Activated B cell treated with CpG ODN at 0.5 μM for 24 hours (primary cell): ENCODE measurements at regions of chr9 and their contacts with region 1.

Region 1: DNA sequence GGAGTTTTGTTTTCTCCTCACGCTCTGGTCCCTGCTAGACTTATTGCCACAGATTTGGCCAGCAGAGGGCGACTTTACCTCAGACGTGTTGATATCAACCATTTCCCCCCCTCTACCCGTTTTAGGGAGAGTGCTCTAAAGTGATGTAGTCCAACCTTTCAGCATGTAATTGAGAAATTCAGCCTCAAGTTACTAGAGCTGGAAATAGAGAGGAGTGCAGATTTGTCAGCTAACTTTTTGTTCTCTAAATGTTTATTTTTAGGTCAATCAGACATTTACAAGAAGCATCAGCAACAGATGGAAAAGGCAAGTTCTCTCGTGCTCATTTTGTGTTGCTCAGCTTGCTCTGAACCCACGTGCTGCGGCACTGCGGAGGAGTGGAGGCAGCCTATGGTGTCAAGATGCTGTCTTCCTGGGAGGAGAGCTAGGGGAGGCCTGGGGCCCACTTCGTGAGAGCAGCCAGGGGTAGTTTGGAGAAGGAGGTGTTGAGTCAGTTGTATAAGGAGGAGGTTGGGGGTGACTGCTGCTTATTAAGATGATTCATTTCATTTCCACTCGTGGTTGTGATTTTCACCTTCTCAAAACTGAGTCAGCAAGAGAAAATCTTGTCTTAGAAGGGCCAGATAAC is 53.6 kb downstream of the GPR107 start:
- DNase-seq: peak; percentile 58
- ATAC-seq: peak; percentile 90
- H3K4me3 Mint-ChIP-seq: no peak overlapping the region
- H3K27ac Mint-ChIP-seq: peak overlapping the region; percentile 41
- H3K4me1 Mint-ChIP-seq: peaks cover 10% of the 10 kb centered on the region
- H3K27me3 Mint-ChIP-seq: no peaks in the 10 kb centered on the region
- CTCF ChIP-seq: peak; percentile 34

Region 2: DNA sequence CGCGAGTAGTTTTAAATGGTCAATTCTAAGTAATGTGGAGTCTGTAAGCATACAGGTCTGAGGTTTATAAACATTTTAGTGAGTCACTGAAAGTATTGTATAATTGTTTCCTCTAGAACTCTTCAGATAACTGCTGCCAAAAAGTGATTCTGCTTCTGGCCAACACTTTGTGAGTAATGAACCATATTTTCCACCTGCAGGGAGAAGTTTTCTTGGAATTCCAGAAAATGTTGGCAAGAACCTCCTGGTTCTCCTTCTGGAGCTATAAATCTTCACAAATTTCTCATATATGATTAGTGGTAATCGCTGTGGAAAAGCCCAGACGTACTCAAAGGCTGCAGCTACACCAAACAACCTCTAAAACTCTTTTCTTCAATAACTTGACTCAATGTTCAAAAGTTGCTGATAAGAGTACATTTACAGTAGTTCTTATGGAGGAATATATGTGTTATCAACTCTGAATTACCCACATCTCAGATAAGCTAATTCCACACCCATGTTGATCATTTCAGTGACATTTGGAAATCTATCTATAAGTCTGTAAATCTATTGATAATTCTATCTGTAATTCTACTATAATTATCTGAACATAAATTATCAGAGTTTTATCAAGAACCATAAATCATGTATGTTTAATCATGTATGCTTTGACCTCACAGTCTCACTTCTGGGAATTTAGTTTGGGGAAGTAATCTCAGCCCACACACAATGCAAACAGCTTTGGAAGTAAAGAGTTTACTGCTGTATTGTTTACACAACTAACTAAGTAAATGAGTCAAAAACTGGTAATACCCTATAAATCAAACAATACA is 138.5 kb before region 1 on chr9:
- CTCF ChIA-PET with region 1: no interaction called
- POLR2A ChIA-PET with region 1: no interaction called
- intact Hi-C with region 1: no loop called
- DNase-seq: no peak
- ATAC-seq: no peak
- H3K4me3 Mint-ChIP-seq: no peak overlapping the region
- H3K27ac Mint-ChIP-seq: peak overlapping the region; percentile 1
- H3K4me1 Mint-ChIP-seq: peaks cover 53% of the 10 kb centered on the region
- H3K27me3 Mint-ChIP-seq: no peaks in the 10 kb centered on the region
- CTCF ChIP-seq: no peak

Region 3: GRCh38 chr9:130128733-130129431 is 21.5 kb after region 1 on chr9:
- CTCF ChIA-PET with region 1: interaction called, 16 read pairs
- POLR2A ChIA-PET with region 1: interaction called, 12 read pairs
- intact Hi-C with region 1: loop called (anchors 1 kb)
- DNase-seq: peak; percentile 50
- ATAC-seq: peak; percentile 79
- H3K4me3 Mint-ChIP-seq: peak overlapping the region; percentile 83
- H3K27ac Mint-ChIP-seq: peak overlapping the region; percentile 99
- H3K4me1 Mint-ChIP-seq: peaks cover 39% of the 10 kb centered on the region
- H3K27me3 Mint-ChIP-seq: no peaks in the 10 kb centered on the region
- CTCF ChIP-seq: no peak

Region 4: DNA sequence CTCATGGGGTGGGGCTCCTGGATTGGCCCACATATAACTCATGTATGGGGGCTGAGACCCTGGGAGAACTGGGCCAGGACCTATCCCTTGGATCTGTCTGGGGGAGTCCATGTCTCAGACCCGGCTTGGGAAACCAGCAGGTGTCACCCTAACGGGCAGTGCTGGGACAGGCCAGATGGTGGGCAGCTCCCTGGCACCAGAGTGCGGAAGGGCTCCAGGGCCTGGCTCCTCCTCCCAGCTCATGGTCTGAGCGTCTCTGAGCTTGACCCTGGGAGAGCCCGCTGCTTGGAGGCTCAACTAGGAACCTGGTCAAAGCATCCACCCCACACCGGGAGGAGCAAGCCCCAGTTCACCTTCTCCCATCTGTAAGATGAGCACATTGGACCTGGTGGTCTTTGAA is 49.3 kb after region 1 on chr9:
- CTCF ChIA-PET with region 1: no interaction called
- POLR2A ChIA-PET with region 1: no interaction called
- intact Hi-C with region 1: no loop called
- DNase-seq: no peak
- ATAC-seq: no peak
- H3K4me3 Mint-ChIP-seq: no peak overlapping the region
- H3K27ac Mint-ChIP-seq: no peak overlapping the region
- H3K4me1 Mint-ChIP-seq: no peaks in the 10 kb centered on the region
- H3K27me3 Mint-ChIP-seq: peaks cover 6% of the 10 kb centered on the region
- CTCF ChIP-seq: no peak

Region 5: DNA sequence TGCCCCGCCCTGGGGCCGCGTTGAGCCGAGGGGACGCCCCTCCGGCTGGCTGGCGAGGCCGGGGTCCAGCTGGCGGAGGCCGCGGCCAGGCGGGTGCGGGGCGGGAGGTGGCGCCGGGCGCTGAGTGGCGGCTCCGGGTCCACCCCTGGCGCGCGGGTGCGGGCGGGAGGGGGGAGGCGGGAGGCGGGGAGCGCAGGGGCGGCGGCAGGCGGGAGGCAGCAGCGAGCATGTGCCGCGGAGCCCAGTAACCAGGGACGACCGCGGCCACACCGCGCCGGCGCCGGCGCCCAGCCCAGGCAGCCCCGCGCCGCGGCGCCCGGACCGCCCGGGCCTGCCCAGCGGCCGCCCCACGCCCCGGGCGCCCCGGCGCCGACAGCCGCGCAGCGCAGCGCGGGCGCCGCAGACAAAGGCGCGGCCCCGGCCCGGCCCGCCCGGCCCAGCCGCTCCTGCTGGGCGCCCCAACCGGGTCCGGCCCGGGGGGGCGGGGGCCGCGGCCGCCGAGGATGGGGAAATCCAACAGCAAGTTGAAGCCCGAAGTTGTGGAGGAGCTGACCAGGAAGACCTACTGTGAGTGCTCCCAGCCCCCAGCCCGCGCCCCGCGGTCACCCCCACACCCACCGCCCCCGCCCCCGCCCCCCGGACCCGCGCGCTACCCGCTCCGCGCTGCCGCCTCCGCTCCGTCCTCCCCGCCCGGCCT is 65.0 kb after region 1 on chr9 and contains the start of gene NCS1:
- CTCF ChIA-PET with region 1: no interaction called
- POLR2A ChIA-PET with region 1: no interaction called
- intact Hi-C with region 1: loop called (anchors 2 kb)
- DNase-seq: no peak
- ATAC-seq: peak; percentile 68
- H3K4me3 Mint-ChIP-seq: peak within 1 kb of the TSS; percentile 66
- H3K27ac Mint-ChIP-seq: no peak within 1 kb of the TSS
- H3K4me1 Mint-ChIP-seq: peaks cover 4% of the 10 kb centered on the region
- H3K27me3 Mint-ChIP-seq: peaks cover 36% of the 10 kb centered on the region
- CTCF ChIP-seq: no peak
- total RNA-seq, gene NCS1: 0.24 and 0.59 TPM in 2 replicates

Region 6: DNA sequence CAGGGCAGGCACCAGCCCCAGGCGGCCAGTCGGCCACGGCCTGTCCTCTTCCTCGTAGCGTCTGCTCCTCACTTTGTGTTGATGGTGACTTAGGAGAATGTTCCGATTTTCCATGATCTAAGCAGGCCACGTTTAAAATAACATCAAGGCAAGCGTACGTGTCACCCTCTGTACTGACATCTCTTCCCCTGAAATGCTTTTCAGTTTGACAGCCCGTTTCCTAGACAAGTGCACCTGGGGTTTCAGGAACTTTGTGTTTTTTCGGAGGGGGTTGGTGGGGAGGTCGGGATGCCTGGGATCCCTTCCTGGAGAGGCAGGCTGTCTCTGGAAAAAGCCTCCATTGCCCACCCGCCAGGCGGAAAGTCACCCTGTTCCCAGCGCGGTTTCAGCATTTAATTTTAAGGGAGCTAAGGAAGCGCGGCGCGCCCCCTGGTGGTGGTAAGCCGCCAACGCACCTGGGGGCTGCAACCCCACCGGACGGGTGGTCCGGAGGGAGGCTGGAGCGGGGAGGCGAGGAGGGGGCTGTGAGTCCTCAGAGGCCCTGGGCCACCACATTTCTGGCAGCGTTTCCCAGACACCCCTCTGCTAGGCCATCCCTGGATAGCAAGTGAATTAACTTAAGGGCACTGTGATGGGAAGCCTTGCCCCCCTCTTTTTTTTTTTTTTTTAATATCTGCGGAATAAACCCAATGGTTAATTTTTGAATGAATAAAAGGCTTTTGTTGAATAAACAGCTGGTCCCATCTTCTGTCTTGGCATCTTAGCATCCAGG is 128.7 kb after region 1 on chr9:
- CTCF ChIA-PET with region 1: interaction called, 108 read pairs
- POLR2A ChIA-PET with region 1: interaction called, 8 read pairs
- intact Hi-C with region 1: loop called (anchors 1 kb)
- DNase-seq: peak; percentile 70
- ATAC-seq: no peak
- H3K4me3 Mint-ChIP-seq: no peak overlapping the region
- H3K27ac Mint-ChIP-seq: no peak overlapping the region
- H3K4me1 Mint-ChIP-seq: peaks cover 28% of the 10 kb centered on the region
- H3K27me3 Mint-ChIP-seq: peaks cover 3% of the 10 kb centered on the region
- CTCF ChIP-seq: peak; percentile 92

Region 7: DNA sequence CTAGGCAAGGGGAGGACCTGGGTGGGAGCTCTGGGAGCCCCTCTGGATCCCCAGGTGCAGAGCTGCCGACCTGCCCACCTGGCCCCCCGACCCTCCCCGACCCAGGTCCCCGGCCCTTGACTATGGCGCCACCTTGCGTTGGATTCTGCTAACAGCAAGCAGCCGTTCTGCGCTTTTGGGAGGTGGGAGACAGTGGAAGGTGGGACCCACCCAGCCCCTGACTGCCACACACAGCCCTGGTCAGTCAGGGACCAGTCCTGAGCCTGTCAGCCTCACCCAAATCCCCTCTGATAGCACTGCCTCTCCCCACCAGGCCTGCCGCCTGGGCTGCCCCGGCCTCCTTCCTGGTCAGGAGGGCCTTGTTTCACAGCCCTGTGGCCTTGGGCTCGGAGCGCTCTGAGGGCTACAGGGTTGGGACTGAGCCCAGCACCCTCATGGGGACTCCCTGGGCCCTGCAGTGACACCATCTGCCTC is 236.1 kb after region 1 on chr9:
- CTCF ChIA-PET with region 1: interaction called, 5 read pairs
- POLR2A ChIA-PET with region 1: no interaction called
- intact Hi-C with region 1: loop called (anchors 1 kb)
- DNase-seq: no peak
- ATAC-seq: peak; percentile 18
- H3K4me3 Mint-ChIP-seq: no peak overlapping the region
- H3K27ac Mint-ChIP-seq: no peak overlapping the region
- H3K4me1 Mint-ChIP-seq: no peaks in the 10 kb centered on the region
- H3K27me3 Mint-ChIP-seq: no peaks in the 10 kb centered on the region
- CTCF ChIP-seq: no peak

Region 8: GRCh38 chr9:130682490-130683121 is 575.3 kb after region 1 on chr9:
- CTCF ChIA-PET with region 1: interaction called, 13 read pairs
- POLR2A ChIA-PET with region 1: no interaction called
- intact Hi-C with region 1: no loop called
- DNase-seq: no peak
- ATAC-seq: peak; percentile 51
- H3K4me3 Mint-ChIP-seq: peak overlapping the region; percentile 90
- H3K27ac Mint-ChIP-seq: no peak overlapping the region
- H3K4me1 Mint-ChIP-seq: peaks cover 8% of the 10 kb centered on the region
- H3K27me3 Mint-ChIP-seq: peaks cover 14% of the 10 kb centered on the region
- CTCF ChIP-seq: peak; percentile 89